ENCODE measurements at regions of chr1 and their contacts with region 1.

Region 1: DNA sequence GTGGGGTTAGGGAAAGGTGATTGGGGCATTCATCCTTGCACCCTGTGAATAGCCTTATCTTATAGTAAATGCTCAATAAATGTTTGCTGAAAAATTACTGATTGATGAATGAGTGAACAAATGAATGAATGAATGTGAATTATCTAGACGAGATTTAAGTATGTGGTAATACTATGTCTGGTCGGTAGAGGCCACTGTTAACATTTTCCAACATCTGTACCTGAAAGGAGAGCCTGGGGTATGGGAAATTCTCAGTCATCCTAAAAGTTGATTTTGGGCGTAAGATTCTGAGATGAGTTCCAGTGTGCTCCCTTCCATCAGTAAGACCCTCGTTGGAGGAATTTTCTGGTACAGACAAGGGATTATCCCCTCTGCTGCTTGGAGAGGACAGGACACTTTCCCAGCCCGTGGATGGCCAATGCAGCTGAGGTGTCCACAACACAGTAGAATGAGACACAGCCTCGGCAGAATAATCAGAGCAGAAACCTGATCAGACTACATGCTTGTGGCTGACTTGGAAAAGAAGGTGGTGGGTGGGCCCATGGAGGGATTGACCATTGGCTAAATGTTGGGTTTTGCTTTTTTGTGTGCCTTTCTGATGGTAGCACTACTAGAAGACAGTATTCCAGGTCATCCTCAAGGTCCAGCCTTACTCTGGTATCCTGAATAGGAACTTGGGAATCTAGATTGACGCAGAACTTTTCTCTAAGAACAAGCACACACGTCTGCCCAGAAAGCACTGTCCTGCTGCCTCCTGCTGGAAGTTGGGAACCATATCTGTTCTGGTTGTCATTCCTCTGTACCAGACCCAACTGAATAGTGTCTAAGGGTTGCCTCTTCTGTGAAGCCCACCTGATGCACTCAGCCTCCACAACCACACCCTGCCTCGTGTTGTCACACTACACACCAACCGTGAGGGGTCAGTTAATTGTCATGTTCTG is 262.0 kb downstream of the TNR start:
- DNase-seq: peak in 2 of 4 donors; percentile 21 to 23
- ATAC-seq: peak; percentile 85
- H3K4me3 ChIP-seq: no peak overlapping the region
- H3K27ac ChIP-seq: no peak overlapping the region
- H3K4me1 ChIP-seq: no peaks in the 10 kb centered on the region
- H3K27me3 ChIP-seq: no peaks in the 10 kb centered on the region
- CTCF ChIP-seq: peak; percentile 44 to 48

Region 2: GRCh38 chr1:175154629-175155472 is 326.5 kb before region 1 on chr1:
- intact Hi-C with region 1: loop called in 1 of 2 experiments (anchors 5 kb)
- DNase-seq: peak in 3 of 4 donors; percentile 72 to 89 (median 74)
- ATAC-seq: peak; percentile 87
- H3K4me3 ChIP-seq: no peak overlapping the region
- H3K27ac ChIP-seq: no peak overlapping the region
- H3K4me1 ChIP-seq: peaks cover 0 to 14% of the 10 kb centered on the region in 2 donors
- H3K27me3 ChIP-seq: peaks cover 0 to 35% of the 10 kb centered on the region in 2 donors
- CTCF ChIP-seq: peak; percentile 82 to 87

Region 3: GRCh38 chr1:175307160-175307559 is 174.2 kb before region 1 on chr1:
- intact Hi-C with region 1: no loop called
- DNase-seq: no peak
- ATAC-seq: no peak
- H3K4me3 ChIP-seq: no peak overlapping the region
- H3K27ac ChIP-seq: no peak overlapping the region
- H3K4me1 ChIP-seq: peaks cover 0 to 3% of the 10 kb centered on the region in 2 donors
- H3K27me3 ChIP-seq: no peaks in the 10 kb centered on the region
- CTCF ChIP-seq: no peak

Region 4: DNA sequence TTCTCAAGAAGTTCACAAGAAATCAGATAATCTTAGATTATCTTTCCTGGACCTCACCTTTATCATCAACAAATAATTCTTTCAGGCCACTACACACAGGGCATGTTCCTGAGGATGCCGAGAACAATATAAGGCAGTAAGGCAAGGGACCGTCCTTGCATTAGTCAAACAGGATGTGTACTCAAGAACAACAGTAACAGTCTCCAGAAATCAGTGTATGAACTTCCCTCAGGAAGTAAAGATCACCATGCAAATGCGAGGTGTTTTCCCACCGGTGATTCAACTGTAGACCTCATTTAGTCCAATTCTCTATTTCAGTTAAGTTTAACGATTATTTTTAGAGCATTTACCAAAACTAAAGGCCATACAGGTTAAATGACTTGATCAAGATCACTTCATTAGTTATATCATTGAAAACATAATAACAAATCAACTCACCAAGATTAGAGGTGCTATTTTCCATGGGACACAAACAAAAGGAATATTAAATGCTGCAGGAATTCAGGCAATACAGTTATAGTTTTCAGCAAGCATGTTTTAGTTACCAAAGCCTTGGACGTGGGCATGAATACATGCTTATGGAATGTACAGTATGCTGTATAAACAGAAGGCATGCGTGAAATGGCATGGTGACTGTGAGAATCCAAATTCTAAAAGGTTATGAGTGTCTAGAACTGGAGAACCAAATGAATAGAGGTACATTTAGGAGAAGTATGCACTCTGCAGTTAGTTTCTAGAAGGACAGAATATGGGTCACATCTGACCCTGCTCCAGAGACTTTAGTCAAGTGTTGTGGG is 116.8 kb after region 1 on chr1:
- intact Hi-C with region 1: loop called in 1 of 2 experiments (anchors 10 kb)
- DNase-seq: no peak
- ATAC-seq: peak; percentile 18
- H3K4me3 ChIP-seq: no peak overlapping the region
- H3K27ac ChIP-seq: peak overlapping the region in 1 of 2 donors; percentile 38
- H3K4me1 ChIP-seq: no peaks in the 10 kb centered on the region
- H3K27me3 ChIP-seq: peaks cover 18 to 23% of the 10 kb centered on the region in 2 donors
- CTCF ChIP-seq: no peak

Region 5: GRCh38 chr1:175742790-175743459 is 261.5 kb after region 1 on chr1:
- intact Hi-C with region 1: loop called in 1 of 2 experiments (anchors 10 kb)
- DNase-seq: peak in 2 of 4 donors; percentile 34 to 65
- ATAC-seq: peak; percentile 68
- H3K4me3 ChIP-seq: no peak overlapping the region
- H3K27ac ChIP-seq: no peak overlapping the region
- H3K4me1 ChIP-seq: no peaks in the 10 kb centered on the region
- H3K27me3 ChIP-seq: peaks cover 0 to 37% of the 10 kb centered on the region in 2 donors
- CTCF ChIP-seq: no peak

Measured in left lung (tissue), 14 donors.